ENCODE measurements at regions of chr11 and their contacts with region 1.

Region 1: DNA sequence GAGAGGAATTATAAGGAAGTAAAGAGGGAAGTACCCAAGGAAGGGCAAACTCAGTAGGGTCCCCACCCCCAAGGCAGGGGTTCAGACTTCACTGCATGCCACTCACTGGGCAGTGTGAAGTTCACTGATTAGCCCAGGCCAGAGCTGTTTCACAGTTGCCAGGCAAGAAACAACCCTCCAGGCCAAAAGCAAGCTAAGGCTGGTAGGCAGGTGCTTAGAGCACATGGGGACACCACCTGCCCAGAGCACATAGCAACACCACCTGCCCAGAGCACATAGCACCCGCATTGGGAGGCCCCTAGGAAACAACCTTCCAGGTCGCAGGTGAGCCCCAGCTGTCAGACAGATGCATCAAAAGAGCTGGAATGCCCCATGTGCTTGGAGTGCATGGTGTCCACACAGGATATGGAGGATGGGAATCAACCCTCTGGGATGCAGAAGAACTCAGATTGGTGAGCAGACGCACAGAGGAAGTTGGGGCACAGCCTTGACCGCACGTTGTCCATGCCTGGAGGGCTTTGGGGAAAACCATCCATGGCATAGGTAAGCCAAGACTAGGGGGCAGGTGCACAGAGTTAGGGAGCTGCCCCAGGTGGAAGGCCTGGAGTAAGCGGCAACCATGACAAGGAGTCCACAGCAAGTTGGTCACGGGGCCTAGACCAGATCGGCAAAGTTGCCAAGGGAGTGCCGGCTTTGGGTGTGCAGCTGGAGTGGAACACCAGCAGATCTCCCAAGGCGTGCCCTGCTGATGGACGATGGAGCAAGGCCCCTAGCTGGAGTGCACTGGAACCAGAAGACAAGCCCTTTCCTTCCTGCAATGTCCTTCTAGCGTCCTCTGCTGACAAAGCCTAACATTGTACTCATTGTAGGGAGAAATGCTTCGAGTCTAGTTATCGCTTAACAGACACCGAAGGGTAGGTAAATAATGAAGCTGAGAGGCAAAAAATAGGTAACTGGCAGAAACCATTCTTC is 7.8 kb upstream of the TMEM216 start:
- DNase-seq: peak; percentile 43
- H3K4me3 ChIP-seq: no peak overlapping the region
- H3K27ac ChIP-seq: no peak overlapping the region
- H3K4me1 ChIP-seq: no peaks in the 10 kb centered on the region
- H3K27me3 ChIP-seq: no peaks in the 10 kb centered on the region
- CTCF ChIP-seq: peak; percentile 32 to 42
- POLR2A ChIP-seq: no peak

Region 2: GRCh38 chr11:61254403-61255025 is 130.0 kb before region 1 on chr11:
- CTCF ChIA-PET with region 1: interaction called, 81 read pairs
- POLR2A ChIA-PET with region 1: no interaction called
- dilution Hi-C with region 1: no loop called
- intact Hi-C with region 1: loop called (anchors 1 kb)
- DNase-seq: peak; percentile 61
- H3K4me3 ChIP-seq: no peak overlapping the region
- H3K27ac ChIP-seq: no peak overlapping the region
- H3K4me1 ChIP-seq: no peaks in the 10 kb centered on the region
- H3K27me3 ChIP-seq: peaks cover 0 to 1% of the 10 kb centered on the region in 2 experiments
- CTCF ChIP-seq: peak; percentile 75 to 96
- POLR2A ChIP-seq: no peak

Region 3: DNA sequence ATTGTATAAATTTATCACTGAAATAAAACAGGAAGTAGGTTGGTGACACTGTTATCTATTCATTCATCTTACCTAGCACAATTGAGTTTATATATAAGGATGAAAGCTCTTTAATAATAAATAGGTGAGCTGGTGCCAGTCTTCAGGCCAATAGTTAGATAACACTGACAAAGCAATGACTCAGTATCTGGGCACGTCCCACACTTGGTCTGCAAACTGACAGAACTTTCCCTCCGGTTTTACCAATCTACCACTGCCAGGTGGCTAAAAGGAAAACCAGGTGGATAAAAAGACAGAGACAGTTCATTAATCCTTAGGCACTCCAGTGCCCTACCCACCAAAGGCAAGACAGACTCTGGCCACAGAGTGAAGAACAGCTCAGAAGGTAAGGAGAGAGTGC is 69.3 kb before region 1 on chr11:
- CTCF ChIA-PET with region 1: interaction called, 15 read pairs
- POLR2A ChIA-PET with region 1: interaction called, 5 read pairs
- dilution Hi-C with region 1: no loop called
- intact Hi-C with region 1: no loop called
- DNase-seq: no peak
- H3K4me3 ChIP-seq: no peak overlapping the region
- H3K27ac ChIP-seq: no peak overlapping the region
- H3K4me1 ChIP-seq: no peaks in the 10 kb centered on the region
- H3K27me3 ChIP-seq: no peaks in the 10 kb centered on the region
- CTCF ChIP-seq: no peak
- POLR2A ChIP-seq: no peak

Region 4: DNA sequence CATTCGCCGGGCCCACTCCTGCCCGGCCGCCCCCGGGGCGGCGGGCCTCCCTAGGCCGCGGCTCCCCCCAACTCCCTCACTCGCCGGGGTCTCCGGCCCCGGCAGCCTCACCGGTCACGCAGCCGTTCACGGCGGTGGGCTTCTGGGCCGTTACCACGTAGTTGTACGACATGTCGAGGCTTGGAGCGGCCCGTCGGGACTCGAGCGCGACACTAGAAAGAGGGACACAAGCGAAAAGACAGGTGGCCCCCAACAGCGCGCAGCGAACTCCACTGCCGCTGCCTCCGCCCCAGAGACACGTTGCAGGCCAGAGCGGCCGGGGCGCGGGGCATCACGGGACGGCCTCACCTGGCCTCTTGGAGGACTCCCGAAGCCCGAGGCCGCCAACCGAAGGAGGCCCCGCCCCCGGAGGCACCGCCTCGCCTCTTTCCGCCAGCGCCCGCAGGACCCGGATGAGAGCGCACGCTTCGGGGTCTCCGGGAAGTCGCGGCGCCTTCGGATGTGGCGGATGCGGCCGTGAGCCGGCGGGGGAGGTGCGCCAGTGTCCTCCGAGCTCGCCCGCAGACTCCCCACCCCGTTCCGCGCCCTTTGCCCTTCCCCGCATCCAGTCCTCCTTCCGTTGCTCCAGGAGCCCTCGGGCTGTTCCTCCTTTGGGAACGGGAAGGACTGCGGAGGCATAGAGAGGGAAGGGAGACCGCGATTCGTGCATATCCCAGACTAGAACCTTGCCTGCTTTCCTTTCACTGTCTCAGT is 51.6 kb before region 1 on chr11 and contains the starts of genes DDB1 and TKFC:
- CTCF ChIA-PET with region 1: interaction called, 345 read pairs
- POLR2A ChIA-PET with region 1: interaction called, 6 read pairs
- dilution Hi-C with region 1: no loop called
- intact Hi-C with region 1: loop called (anchors 1 kb)
- DNase-seq: peak; percentile 94
- H3K4me3 ChIP-seq: peak within 1 kb of the TSS; percentile 67 to 85 (median 76)
- H3K27ac ChIP-seq: peak within 1 kb of the TSS; percentile 40
- H3K4me1 ChIP-seq: peaks cover 10% of the 10 kb centered on the region
- H3K27me3 ChIP-seq: no peaks in the 10 kb centered on the region
- CTCF ChIP-seq: no peak
- POLR2A ChIP-seq: peak; percentile 98
- total RNA-seq, gene DDB1: 229 TPM in 2 replicates
- total RNA-seq, gene TKFC: 28.6 and 30.8 TPM in 2 replicates

Region 5: GRCh38 chr11:61347916-61348461 is 36.6 kb before region 1 on chr11:
- CTCF ChIA-PET with region 1: interaction called, 15 read pairs
- POLR2A ChIA-PET with region 1: no interaction called
- dilution Hi-C with region 1: no loop called
- intact Hi-C with region 1: no loop called
- DNase-seq: peak; percentile 92
- H3K4me3 ChIP-seq: no peak overlapping the region
- H3K27ac ChIP-seq: peak overlapping the region; percentile 58
- H3K4me1 ChIP-seq: peaks cover 14% of the 10 kb centered on the region
- H3K27me3 ChIP-seq: no peaks in the 10 kb centered on the region
- CTCF ChIP-seq: peak in 1 of 2 donors; percentile 35
- POLR2A ChIP-seq: peak; percentile 69

Region 6: DNA sequence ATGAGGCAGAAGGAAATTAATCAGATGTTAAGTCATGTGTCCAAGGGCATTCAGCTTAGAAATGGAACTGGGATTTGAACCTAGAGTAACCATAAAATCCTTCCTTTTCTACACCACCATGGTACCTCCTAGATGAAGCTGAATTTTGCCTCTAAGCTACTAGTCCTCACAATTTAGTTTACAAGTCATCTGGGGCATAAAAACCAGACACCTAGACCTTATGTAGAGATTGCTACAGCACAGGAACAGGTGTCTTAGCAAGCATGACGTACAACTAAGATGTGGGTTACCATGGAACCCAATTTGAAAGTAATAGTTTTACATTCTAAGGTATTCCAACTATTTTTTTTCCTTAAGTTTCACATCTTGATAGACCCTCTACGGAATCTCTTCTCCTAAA is 17.0 kb after region 1 on chr11:
- CTCF ChIA-PET with region 1: interaction called, 10 read pairs
- POLR2A ChIA-PET with region 1: interaction called, 7 read pairs
- dilution Hi-C with region 1: no loop called
- intact Hi-C with region 1: no loop called
- DNase-seq: no peak
- H3K4me3 ChIP-seq: no peak overlapping the region
- H3K27ac ChIP-seq: no peak overlapping the region
- H3K4me1 ChIP-seq: no peaks in the 10 kb centered on the region
- H3K27me3 ChIP-seq: no peaks in the 10 kb centered on the region
- CTCF ChIP-seq: no peak
- POLR2A ChIP-seq: no peak